ENCODE measurements at regions of chr7 and their contacts with region 1.

Region 1: GRCh38 chr7:73557108-73557396 is 438 bp downstream of the BCL7B start:
- DNase-seq: peak; percentile 90
- H3K4me3 Mint-ChIP-seq: peak overlapping the region; percentile 88
- H3K27ac Mint-ChIP-seq: peak overlapping the region; percentile 90
- H3K4me1 Mint-ChIP-seq: peaks cover 36% of the 10 kb centered on the region
- H3K27me3 Mint-ChIP-seq: no peaks in the 10 kb centered on the region

Region 2: DNA sequence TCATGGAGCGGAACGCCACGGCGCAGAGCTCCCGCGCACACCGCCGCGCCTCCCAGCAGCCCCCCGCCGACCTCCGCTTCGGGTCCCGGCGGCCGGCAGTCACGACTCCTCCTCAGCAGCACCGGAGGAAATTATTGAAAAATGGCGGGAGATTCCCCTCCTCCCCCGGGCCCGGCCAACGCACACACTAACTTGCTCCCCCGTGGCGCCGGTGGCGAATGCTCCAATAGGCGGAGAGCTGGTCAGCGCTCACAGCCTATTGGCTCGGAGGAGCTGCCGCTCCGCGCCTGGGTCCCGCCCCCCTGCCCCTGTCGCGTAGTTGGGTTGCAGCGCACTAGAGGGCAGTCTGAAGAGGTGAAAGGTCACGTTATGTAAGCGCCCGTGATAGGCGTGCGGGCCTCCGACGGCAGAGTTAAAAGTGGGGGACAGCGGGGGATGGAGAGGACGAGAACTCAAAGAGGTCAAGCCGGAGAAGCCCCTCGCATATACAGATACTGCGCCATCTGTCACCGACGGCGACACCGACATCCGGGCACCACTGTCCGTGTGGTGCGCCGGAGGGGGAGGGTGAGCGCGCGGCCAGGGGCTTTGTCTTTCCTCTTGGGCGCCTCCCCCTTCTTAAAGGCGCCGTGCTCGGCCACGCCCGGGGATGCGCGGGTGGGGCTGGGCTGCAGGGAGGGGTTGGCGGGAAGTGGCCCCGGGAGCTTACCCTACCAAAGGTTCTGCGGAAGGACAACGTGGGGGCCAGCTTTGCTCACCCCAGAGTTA is 34.8 kb before region 1 on chr7 and contains the start of gene BAZ1B:
- intact Hi-C with region 1: loop called (anchors 1 kb)
- DNase-seq: peak; percentile 95
- H3K4me3 Mint-ChIP-seq: peak within 1 kb of the TSS; percentile 98
- H3K27ac Mint-ChIP-seq: peak within 1 kb of the TSS; percentile 94
- H3K4me1 Mint-ChIP-seq: peaks cover 52% of the 10 kb centered on the region
- H3K27me3 Mint-ChIP-seq: no peaks in the 10 kb centered on the region
- total RNA-seq, gene BAZ1B: 99.6 and 101 TPM in 2 replicates

Region 3: DNA sequence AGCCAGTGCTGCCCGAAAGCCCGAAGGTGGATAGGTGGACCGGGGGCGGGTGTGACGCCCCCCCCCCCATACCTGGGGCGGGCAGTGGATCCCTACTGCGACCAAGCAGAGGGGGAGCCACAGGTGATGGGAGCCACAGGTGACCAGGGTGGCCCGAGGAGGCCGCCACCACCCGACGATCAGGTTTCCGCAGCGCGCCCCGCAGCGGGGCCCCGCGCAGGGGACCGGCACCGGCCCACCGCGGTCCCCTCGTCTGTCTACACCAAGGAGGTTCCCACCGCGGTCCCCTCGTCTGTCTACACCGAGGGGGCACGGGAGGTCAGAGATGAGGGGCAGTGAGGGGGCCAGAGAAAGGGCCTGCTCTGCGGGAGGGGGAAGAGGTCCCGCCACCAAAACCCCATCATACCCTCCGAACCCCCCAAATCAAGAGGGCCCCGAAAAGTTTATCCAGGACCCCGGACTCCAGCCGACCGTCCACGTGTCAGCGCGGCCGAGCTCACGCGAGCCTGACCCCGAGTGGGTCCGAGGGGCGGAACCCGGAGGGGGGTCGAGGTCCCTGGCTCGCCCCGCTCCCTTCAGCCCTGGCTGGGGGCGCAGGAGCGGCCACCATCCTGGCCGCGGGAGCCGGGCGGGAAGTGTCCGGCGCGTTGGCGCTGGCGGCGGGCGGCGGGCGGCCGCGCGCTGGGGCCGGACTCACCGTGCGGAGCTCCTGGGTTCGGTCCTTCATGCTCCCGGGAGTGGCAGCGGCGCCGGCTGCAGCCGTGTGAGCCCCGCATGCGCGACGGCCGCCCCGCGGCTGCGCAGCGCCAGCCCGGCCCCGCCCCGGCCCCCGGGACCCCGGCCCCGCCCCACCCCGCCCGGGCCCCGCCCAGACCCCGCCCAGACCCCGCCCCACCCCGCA is 162.1 kb after region 1 on chr7 and contains the start of gene STX1A:
- intact Hi-C with region 1: no loop called
- DNase-seq: peak; percentile 71
- H3K4me3 Mint-ChIP-seq: peak within 1 kb of the TSS; percentile 89
- H3K27ac Mint-ChIP-seq: peak within 1 kb of the TSS; percentile 62
- H3K4me1 Mint-ChIP-seq: peaks cover 31% of the 10 kb centered on the region
- H3K27me3 Mint-ChIP-seq: peaks cover 9% of the 10 kb centered on the region
- total RNA-seq, gene STX1A: 17.2 and 17.6 TPM in 2 replicates

Region 4: GRCh38 chr7:73746003-73746777 is 189.1 kb after region 1 on chr7:
- intact Hi-C with region 1: no loop called
- DNase-seq: no peak
- H3K4me3 Mint-ChIP-seq: no peak overlapping the region
- H3K27ac Mint-ChIP-seq: no peak overlapping the region
- H3K4me1 Mint-ChIP-seq: no peaks in the 10 kb centered on the region
- H3K27me3 Mint-ChIP-seq: peaks cover 6% of the 10 kb centered on the region